MCF 10A (cell line): ENCODE measurements at regions of chr14 and their contacts with region 1.

Region 1: GRCh38 chr14:51564967-51565795 is 86.5 kb upstream of the FRMD6 start:
- DNase-seq: peak; percentile 69
- H3K4me3 Mint-ChIP-seq: no peak overlapping the region
- H3K27ac Mint-ChIP-seq: peak overlapping the region; percentile 54
- H3K4me1 Mint-ChIP-seq: peaks cover 12% of the 10 kb centered on the region
- H3K27me3 Mint-ChIP-seq: no peaks in the 10 kb centered on the region
- CTCF ChIP-seq: no peak

Region 2: DNA sequence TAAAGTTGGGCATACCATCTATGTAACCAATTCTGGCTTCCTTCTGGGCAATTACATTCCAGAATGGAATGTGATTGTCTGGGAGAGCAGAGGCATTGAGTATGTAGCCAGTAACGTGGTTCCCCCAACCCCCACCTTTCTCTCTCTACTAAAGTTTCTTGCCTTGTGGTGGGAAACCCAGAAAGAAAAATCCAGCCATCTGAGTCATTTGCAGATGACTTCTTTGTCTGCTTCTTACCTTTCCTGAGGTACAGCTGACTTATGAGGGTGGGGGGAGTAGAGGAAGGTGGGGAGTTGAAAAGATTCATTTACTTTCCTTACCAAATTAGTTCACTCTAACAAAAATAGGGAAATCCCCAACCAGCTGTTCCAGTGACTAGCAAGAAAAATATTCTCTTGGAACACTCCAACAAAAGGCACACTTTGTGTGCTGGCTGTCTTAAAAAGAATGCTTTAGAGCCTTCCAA is 25.6 kb before region 1 on chr14:
- CTCF ChIA-PET with region 1: no interaction called
- POLR2A ChIA-PET with region 1: interaction called, 15 read pairs
- intact Hi-C with region 1: no loop called
- DNase-seq: peak; percentile 81
- H3K4me3 Mint-ChIP-seq: peak overlapping the region; percentile 49
- H3K27ac Mint-ChIP-seq: peak overlapping the region; percentile 92
- H3K4me1 Mint-ChIP-seq: peaks cover 52% of the 10 kb centered on the region
- H3K27me3 Mint-ChIP-seq: no peaks in the 10 kb centered on the region
- CTCF ChIP-seq: no peak

Region 3: GRCh38 chr14:51547260-51547659 is 17.9 kb before region 1 on chr14:
- CTCF ChIA-PET with region 1: interaction called, 5 read pairs
- POLR2A ChIA-PET with region 1: interaction called, 33 read pairs
- intact Hi-C with region 1: no loop called
- DNase-seq: peak; percentile 99
- H3K4me3 Mint-ChIP-seq: peak overlapping the region; percentile 46
- H3K27ac Mint-ChIP-seq: peak overlapping the region; percentile 94
- H3K4me1 Mint-ChIP-seq: peaks cover 45% of the 10 kb centered on the region
- H3K27me3 Mint-ChIP-seq: no peaks in the 10 kb centered on the region
- CTCF ChIP-seq: no peak

Region 4: GRCh38 chr14:51552765-51553404 is 12.3 kb before region 1 on chr14:
- CTCF ChIA-PET with region 1: interaction called, 5 read pairs
- POLR2A ChIA-PET with region 1: interaction called, 33 read pairs
- intact Hi-C with region 1: no loop called
- DNase-seq: peak; percentile 91
- H3K4me3 Mint-ChIP-seq: no peak overlapping the region
- H3K27ac Mint-ChIP-seq: no peak overlapping the region
- H3K4me1 Mint-ChIP-seq: peaks cover 24% of the 10 kb centered on the region
- H3K27me3 Mint-ChIP-seq: no peaks in the 10 kb centered on the region
- CTCF ChIP-seq: no peak